ENCODE measurements at regions of chr3 and their contacts with region 1.

Region 1: DNA sequence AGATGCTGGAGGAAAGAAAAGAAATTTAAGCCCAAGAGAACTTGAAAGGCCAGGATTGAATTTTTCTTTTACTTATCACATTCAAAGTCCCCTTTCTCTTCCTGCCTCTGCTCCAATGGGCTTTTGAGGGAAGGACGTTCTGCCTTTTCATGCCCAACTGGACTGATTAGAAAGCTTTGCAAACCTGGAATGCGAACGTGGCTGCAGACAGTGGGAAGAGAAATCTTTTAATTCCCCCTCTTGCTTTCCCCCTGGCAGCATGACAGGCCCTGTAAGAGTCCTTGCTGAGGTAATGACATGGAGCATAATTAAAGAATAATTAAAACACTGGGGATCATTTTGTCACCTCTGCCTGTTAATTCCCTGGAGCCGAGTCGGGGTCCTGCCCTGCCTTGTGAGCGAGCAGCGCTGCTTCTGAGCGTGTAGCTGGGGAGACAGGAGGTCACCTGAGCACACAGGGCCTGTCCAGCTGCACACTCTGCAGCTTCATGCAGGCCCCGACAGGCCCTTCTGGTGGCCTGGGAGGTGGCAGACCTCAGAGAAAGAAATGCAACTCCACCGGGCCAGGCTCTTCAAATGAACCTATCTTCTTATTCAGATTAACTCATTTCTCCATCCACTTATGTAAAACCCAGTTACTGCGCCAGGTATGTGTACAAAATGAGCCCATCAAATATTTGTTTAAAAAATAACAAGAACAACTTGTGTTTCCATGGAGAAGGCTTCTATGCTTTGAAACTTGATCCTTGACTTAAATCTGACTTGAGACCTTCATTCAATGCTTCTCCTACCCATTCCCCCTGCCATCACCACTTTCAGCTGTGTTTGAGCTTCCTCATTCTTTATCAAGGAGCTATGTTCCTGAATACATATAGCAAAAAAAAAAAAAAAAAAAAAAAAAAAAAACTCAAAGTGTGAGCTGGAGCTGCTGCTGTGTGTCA is 628.2 kb upstream of the CFAP20DC start:
- DNase-seq: no peak
- ATAC-seq: no peak
- H3K4me3 ChIP-seq: no peak overlapping the region
- H3K4me3 Mint-ChIP-seq: no peak overlapping the region
- H3K27ac ChIP-seq: no peak overlapping the region
- H3K27ac Mint-ChIP-seq: no peak overlapping the region
- H3K4me1 ChIP-seq: no peaks in the 10 kb centered on the region
- H3K4me1 Mint-ChIP-seq: no peaks in the 10 kb centered on the region
- H3K27me3 ChIP-seq: no peaks in the 10 kb centered on the region
- H3K27me3 Mint-ChIP-seq: peaks cover 0 to 2% of the 10 kb centered on the region in 2 donors

Region 2: DNA sequence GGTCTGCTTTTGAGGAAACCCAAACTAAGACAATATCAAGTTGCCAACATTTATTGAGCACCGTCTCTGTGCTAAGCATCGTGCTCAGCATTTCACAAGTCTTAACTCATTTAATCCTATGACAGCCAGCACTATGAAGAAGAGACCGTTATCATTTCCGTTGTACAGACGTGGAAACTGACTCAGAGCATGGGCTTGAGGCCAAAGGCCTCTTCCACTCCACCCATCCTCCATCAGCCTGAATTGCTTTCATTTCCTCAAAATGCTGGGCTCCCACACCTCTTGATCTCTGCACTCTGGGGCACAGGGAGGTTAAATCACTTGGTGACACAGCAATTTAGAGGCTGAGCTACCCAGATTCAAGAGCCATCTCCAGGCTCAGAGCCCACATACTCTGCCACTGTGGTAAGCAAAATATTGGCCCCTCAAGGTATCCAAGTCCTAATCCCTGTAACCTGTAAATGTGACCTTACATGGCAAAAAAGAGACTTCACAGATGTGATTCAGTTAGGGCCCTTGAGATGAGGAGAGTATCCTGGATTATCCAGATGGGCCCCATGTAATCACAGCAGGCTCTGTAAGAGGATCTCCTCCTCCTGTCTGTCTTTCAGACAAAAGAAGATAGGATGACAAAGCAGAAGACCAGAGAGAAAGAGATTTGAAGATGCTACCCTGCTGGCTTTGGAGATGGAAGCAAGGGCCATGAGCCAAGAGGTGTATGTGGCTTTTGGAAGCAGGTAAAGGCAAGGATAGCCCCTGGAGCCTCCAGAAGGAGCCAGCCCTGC is 1694.1 kb before region 1 on chr3:
- CTCF ChIA-PET with region 1: no interaction called
- POLR2A ChIA-PET with region 1: no interaction called
- DNase-seq: peak in 24 of 35 experiments; percentile 3 to 47 (median 14)
- ATAC-seq: peak; percentile 89 to 95 (median 92)
- H3K4me3 ChIP-seq: no peak overlapping the region
- H3K4me3 Mint-ChIP-seq: peak overlapping the region in 1 of 3 donors; percentile 20
- H3K27ac ChIP-seq: peak overlapping the region; percentile 63
- H3K27ac Mint-ChIP-seq: peak overlapping the region; percentile 80 to 85
- H3K4me1 ChIP-seq: peaks cover 7 to 16% of the 10 kb centered on the region in 2 experiments
- H3K4me1 Mint-ChIP-seq: peaks cover 17 to 24% (median 21%) of the 10 kb centered on the region in 3 donors
- H3K27me3 ChIP-seq: no peaks in the 10 kb centered on the region
- H3K27me3 Mint-ChIP-seq: no peaks in the 10 kb centered on the region

Region 3: DNA sequence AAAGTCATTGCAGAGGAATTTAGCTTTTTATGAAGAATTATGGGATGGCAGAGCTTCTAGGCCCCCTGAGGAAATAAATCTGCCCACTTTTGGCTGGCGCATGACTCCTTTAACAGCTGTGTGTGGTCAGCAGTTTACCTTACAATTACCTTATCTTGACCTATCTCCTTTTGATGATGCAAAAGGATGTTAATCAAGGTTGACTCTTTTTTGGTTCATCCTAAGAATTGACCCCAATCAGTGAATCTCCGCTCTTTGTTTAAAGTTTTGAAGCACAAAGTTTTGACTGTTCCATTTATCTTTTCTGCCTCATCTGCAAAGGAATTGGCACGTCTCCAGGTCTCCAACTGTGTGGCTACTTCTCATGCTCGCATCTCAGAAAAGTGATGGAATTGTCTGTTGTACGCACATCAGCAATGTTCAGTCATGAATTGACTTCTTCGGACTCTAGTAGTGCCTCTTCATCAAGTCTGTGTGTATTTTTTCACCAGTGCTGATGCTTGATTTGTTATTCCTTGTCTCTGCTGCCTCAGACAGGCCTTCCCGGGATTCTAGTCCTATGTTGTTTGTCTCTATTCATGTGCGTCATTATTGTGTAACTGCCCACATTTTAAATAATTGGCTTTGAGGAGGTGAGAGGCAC is 432.0 kb before region 1 on chr3:
- CTCF ChIA-PET with region 1: no interaction called
- POLR2A ChIA-PET with region 1: no interaction called
- DNase-seq: no peak
- ATAC-seq: no peak
- H3K4me3 ChIP-seq: no peak overlapping the region
- H3K4me3 Mint-ChIP-seq: no peak overlapping the region
- H3K27ac ChIP-seq: no peak overlapping the region
- H3K27ac Mint-ChIP-seq: no peak overlapping the region
- H3K4me1 ChIP-seq: no peaks in the 10 kb centered on the region
- H3K4me1 Mint-ChIP-seq: no peaks in the 10 kb centered on the region
- H3K27me3 ChIP-seq: no peaks in the 10 kb centered on the region
- H3K27me3 Mint-ChIP-seq: no peaks in the 10 kb centered on the region

Region 4: DNA sequence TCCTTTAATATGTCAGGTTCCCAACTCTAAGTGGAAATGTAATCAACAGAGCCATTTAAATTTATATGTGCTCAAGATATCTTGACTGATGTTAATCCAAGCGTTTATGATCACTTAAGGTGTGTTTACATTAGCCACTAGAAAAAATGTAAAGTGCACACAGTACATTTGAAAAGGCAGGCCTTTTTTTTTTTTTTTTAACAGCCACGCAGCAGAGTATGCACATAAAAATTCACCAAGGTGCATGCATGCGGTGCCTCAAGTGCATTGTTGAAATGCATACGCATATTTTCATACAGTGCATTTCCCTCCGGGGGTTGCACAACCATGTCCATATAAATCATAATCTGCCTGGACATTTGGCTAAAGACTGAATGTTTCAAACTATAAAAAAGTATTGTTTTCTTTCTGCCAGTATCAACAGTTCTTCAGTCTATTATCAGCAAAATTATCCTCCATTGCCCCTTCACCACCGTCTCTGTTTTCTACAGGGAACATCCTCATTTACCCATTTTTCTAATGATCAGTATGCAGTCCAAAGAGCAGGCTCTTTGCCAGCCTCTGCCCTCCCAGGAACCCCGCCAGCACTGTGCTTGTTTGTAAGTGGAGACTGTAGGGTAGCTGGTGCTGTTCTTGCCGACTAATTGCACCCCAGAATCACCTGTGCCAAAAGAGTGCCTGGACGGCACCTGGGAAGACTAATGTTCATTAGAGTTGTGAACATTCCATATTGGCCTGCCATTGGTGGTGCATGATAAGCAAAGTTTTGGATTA is 17.0 kb before region 1 on chr3:
- CTCF ChIA-PET with region 1: no interaction called
- POLR2A ChIA-PET with region 1: no interaction called
- DNase-seq: no peak
- ATAC-seq: no peak
- H3K4me3 ChIP-seq: no peak overlapping the region
- H3K4me3 Mint-ChIP-seq: no peak overlapping the region
- H3K27ac ChIP-seq: no peak overlapping the region
- H3K27ac Mint-ChIP-seq: no peak overlapping the region
- H3K4me1 ChIP-seq: no peaks in the 10 kb centered on the region
- H3K4me1 Mint-ChIP-seq: no peaks in the 10 kb centered on the region
- H3K27me3 ChIP-seq: no peaks in the 10 kb centered on the region
- H3K27me3 Mint-ChIP-seq: no peaks in the 10 kb centered on the region

Region 5: GRCh38 chr3:59759298-59760031 is 81.4 kb after region 1 on chr3:
- CTCF ChIA-PET with region 1: interaction called in 1 of 2 experiments, 15 read pairs
- POLR2A ChIA-PET with region 1: no interaction called
- DNase-seq: no peak
- ATAC-seq: no peak
- H3K4me3 ChIP-seq: no peak overlapping the region
- H3K4me3 Mint-ChIP-seq: no peak overlapping the region
- H3K27ac ChIP-seq: no peak overlapping the region
- H3K27ac Mint-ChIP-seq: no peak overlapping the region
- H3K4me1 ChIP-seq: peaks cover 9 to 33% of the 10 kb centered on the region in 2 experiments
- H3K4me1 Mint-ChIP-seq: peaks cover 62 to 90% (median 87%) of the 10 kb centered on the region in 3 donors
- H3K27me3 ChIP-seq: no peaks in the 10 kb centered on the region
- H3K27me3 Mint-ChIP-seq: no peaks in the 10 kb centered on the region

Measured in T-cell (primary cell).